ENCODE measurements at regions of chr10 and their contacts with region 1.

Region 1: GRCh38 chr10:117537436-117537903 is 5.1 kb upstream of the EMX2 start:
- DNase-seq: no peak
- H3K4me3 ChIP-seq: no peak overlapping the region
- H3K27ac ChIP-seq: no peak overlapping the region
- H3K4me1 ChIP-seq: peaks cover 6% of the 10 kb centered on the region
- H3K27me3 ChIP-seq: peaks cover 98% of the 10 kb centered on the region
- CTCF ChIP-seq: peak; percentile 50

Region 2: GRCh38 chr10:117241541-117242462 is 295.7 kb before region 1 on chr10:
- intact Hi-C with region 1: no loop called
- DNase-seq: no peak
- H3K4me3 ChIP-seq: no peak overlapping the region
- H3K27ac ChIP-seq: no peak overlapping the region
- H3K4me1 ChIP-seq: no peaks in the 10 kb centered on the region
- H3K27me3 ChIP-seq: peaks cover 18% of the 10 kb centered on the region
- CTCF ChIP-seq: no peak

Region 3: GRCh38 chr10:117581961-117582360 is 44.5 kb after region 1 on chr10:
- intact Hi-C with region 1: no loop called
- DNase-seq: no peak
- H3K4me3 ChIP-seq: no peak overlapping the region
- H3K27ac ChIP-seq: no peak overlapping the region
- H3K4me1 ChIP-seq: no peaks in the 10 kb centered on the region
- H3K27me3 ChIP-seq: no peaks in the 10 kb centered on the region
- CTCF ChIP-seq: no peak

Region 4: GRCh38 chr10:118241229-118242137 is 704.0 kb after region 1 on chr10:
- intact Hi-C with region 1: loop called (anchors 5 kb)
- DNase-seq: peak; percentile 82
- H3K4me3 ChIP-seq: no peak overlapping the region
- H3K27ac ChIP-seq: no peak overlapping the region
- H3K4me1 ChIP-seq: no peaks in the 10 kb centered on the region
- H3K27me3 ChIP-seq: peaks cover 3% of the 10 kb centered on the region
- CTCF ChIP-seq: peak; percentile 90

Measured in colonic mucosa (tissue), 4 donors.